CD4-positive, alpha-beta T cell (primary cell): ENCODE measurements at regions of chr16 and their contacts with region 1.

Region 1: GRCh38 chr16:17369421-17370222 is 101.1 kb downstream of the XYLT1 start:
- DNase-seq: peak; percentile 61 to 93 (median 76)
- ATAC-seq: peak; percentile 83
- H3K4me3 ChIP-seq: peak overlapping the region; percentile 54
- H3K4me3 Mint-ChIP-seq: peak overlapping the region; percentile 88
- H3K27ac ChIP-seq: peak overlapping the region; percentile 88 to 90
- H3K27ac Mint-ChIP-seq: peak overlapping the region; percentile 93
- H3K4me1 ChIP-seq: peaks cover 79% of the 10 kb centered on the region
- H3K4me1 Mint-ChIP-seq: peaks cover 96% of the 10 kb centered on the region
- H3K27me3 ChIP-seq: no peaks in the 10 kb centered on the region
- H3K27me3 Mint-ChIP-seq: no peaks in the 10 kb centered on the region
- CTCF ChIP-seq: no peak

Region 2: GRCh38 chr16:17194190-17194780 is 175.3 kb before region 1 on chr16:
- CTCF ChIA-PET with region 1: interaction called, 3 read pairs
- POLR2A ChIA-PET with region 1: no interaction called
- intact Hi-C with region 1: loop called in 1 of 2 experiments (anchors 5 kb)
- DNase-seq: peak; percentile 36 to 77 (median 50)
- ATAC-seq: no peak
- H3K4me3 ChIP-seq: no peak overlapping the region
- H3K4me3 Mint-ChIP-seq: no peak overlapping the region
- H3K27ac ChIP-seq: no peak overlapping the region
- H3K27ac Mint-ChIP-seq: no peak overlapping the region
- H3K4me1 ChIP-seq: no peaks in the 10 kb centered on the region
- H3K4me1 Mint-ChIP-seq: no peaks in the 10 kb centered on the region
- H3K27me3 ChIP-seq: no peaks in the 10 kb centered on the region
- H3K27me3 Mint-ChIP-seq: no peaks in the 10 kb centered on the region
- CTCF ChIP-seq: peak; percentile 73

Region 3: GRCh38 chr16:17382949-17383863 is 13.6 kb after region 1 on chr16:
- CTCF ChIA-PET with region 1: interaction called, 5 read pairs
- POLR2A ChIA-PET with region 1: interaction called, 18 read pairs
- intact Hi-C with region 1: no loop called
- DNase-seq: peak in 2 of 14 experiments; percentile 49 to 63
- ATAC-seq: peak; percentile 44
- H3K4me3 ChIP-seq: no peak overlapping the region
- H3K4me3 Mint-ChIP-seq: peak overlapping the region; percentile 26
- H3K27ac ChIP-seq: no peak overlapping the region
- H3K27ac Mint-ChIP-seq: peak overlapping the region; percentile 25
- H3K4me1 ChIP-seq: peaks cover 37% of the 10 kb centered on the region
- H3K4me1 Mint-ChIP-seq: peaks cover 84% of the 10 kb centered on the region
- H3K27me3 ChIP-seq: no peaks in the 10 kb centered on the region
- H3K27me3 Mint-ChIP-seq: no peaks in the 10 kb centered on the region
- CTCF ChIP-seq: no peak

Region 4: GRCh38 chr16:17416461-17417311 is 47.1 kb after region 1 on chr16:
- CTCF ChIA-PET with region 1: no interaction called
- POLR2A ChIA-PET with region 1: interaction called, 22 read pairs
- intact Hi-C with region 1: loop called in 1 of 2 experiments (anchors 1 kb)
- DNase-seq: peak; percentile 24 to 80 (median 37)
- ATAC-seq: peak; percentile 92
- H3K4me3 ChIP-seq: peak overlapping the region; percentile 46
- H3K4me3 Mint-ChIP-seq: peak overlapping the region; percentile 87
- H3K27ac ChIP-seq: peak overlapping the region; percentile 47 to 60
- H3K27ac Mint-ChIP-seq: peak overlapping the region; percentile 84
- H3K4me1 ChIP-seq: peaks cover 48% of the 10 kb centered on the region
- H3K4me1 Mint-ChIP-seq: peaks cover 53% of the 10 kb centered on the region
- H3K27me3 ChIP-seq: no peaks in the 10 kb centered on the region
- H3K27me3 Mint-ChIP-seq: no peaks in the 10 kb centered on the region
- CTCF ChIP-seq: peak; percentile 46

Region 5: DNA sequence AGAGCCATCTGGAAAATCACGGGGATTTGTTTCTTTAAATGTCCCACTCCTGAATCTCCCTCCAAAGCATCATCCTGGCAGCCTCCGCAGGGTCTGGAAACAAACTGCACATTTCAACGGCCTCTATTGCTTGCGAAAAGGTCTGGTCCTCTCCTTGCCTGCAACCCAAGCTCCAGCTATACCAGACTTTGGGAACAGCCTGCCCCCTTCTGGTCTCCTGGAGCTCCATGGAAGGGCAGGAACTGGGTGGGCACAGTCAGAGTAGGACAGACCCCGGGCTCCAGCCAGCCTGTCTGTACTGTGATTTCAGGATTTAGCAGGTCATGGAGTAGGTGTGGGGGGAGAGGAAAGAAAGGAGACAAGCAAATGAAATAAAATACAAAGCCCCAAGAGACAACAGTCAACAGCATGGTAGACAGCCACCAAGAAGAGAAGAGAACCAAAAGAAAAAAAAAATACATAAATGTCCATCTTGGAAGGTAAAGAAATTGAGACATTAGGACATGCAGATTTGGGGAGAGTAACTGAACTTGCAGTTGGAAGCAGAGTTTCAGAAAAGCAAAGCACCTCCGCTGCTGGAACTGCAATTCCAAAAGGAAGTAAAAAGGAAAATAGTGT is 98.4 kb after region 1 on chr16:
- CTCF ChIA-PET with region 1: no interaction called
- POLR2A ChIA-PET with region 1: interaction called, 19 read pairs
- intact Hi-C with region 1: loop called (anchors 1 to 2 kb)
- DNase-seq: peak in 12 of 14 experiments; percentile 18 to 67 (median 44)
- ATAC-seq: no peak
- H3K4me3 ChIP-seq: peak overlapping the region; percentile 2
- H3K4me3 Mint-ChIP-seq: peak overlapping the region; percentile 98
- H3K27ac ChIP-seq: no peak overlapping the region
- H3K27ac Mint-ChIP-seq: peak overlapping the region; percentile 85
- H3K4me1 ChIP-seq: peaks cover 34% of the 10 kb centered on the region
- H3K4me1 Mint-ChIP-seq: peaks cover 58% of the 10 kb centered on the region
- H3K27me3 ChIP-seq: no peaks in the 10 kb centered on the region
- H3K27me3 Mint-ChIP-seq: no peaks in the 10 kb centered on the region
- CTCF ChIP-seq: peak; percentile 48